Panc1 (cell line): ENCODE measurements at regions of chr1 and their contacts with region 1.

Region 1: DNA sequence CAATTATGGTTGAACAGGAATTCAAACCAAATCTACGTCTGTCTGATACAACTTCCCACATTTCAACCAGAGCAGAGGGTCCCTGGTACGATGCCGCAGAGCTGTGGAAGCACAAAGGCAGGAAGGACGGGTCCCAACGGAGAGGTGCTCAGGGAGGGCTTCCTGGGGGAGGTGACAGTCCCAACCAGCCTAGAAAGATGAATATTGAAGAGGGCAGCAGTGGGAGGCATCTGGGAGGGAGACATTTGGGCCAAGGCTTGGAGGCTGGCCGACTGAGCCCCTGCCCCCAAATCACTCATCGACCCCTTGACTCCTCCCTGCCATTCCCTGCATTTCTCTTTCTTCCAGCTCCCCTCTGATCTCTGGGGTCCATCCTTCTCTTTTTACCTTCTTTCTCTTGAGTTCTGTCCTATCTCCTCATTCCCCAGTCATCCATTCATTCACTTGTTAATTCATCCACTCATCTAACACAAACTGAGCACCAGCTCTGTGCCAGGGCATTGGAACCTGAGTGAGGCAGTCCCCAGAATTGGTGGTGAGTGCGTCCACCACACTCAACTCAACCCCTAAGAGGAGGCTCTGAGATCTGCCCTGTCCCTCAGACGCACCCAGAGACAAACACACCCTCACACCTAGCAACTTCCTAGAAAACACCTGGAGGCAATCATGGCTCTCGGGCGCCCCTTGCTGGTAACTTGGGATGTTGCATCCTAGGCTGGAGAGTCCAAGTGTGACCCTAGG is 13.2 kb upstream of the CELA3B start:
- DNase-seq: peak; percentile 62
- ATAC-seq: peak; percentile 91
- H3K4me3 ChIP-seq: no peak overlapping the region
- H3K27ac ChIP-seq: peak overlapping the region; percentile 32
- H3K4me1 ChIP-seq: peaks cover 8% of the 10 kb centered on the region
- H3K27me3 ChIP-seq: no peaks in the 10 kb centered on the region
- CTCF ChIP-seq: peak; percentile 93; the same call in 1 of the 2 replicates

Region 2: DNA sequence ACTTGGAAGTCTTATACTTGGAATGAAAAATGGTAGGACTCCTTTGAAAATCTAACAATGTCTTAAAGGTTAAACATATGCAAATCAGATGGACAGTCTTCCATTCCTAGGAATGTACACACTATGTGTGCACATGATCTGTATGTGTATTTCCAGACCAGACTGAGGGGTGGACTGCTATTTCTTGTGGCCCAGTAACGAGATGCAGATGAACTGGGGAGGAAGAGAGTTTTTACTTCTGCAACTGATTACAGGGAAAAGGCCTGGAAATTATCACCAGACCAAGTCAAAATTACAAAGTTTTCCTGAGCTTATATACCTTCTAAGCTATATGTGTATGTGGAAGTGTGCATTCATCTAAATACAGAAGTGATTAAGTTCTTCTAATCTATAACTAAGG is 506.0 kb before region 1 on chr1:
- CTCF ChIA-PET with region 1: no interaction called
- POLR2A ChIA-PET with region 1: no interaction called
- in situ Hi-C with region 1: no loop called
- intact Hi-C with region 1: no loop called
- DNase-seq: no peak
- ATAC-seq: no peak
- H3K4me3 ChIP-seq: no peak overlapping the region
- H3K27ac ChIP-seq: no peak overlapping the region
- H3K4me1 ChIP-seq: no peaks in the 10 kb centered on the region
- H3K27me3 ChIP-seq: no peaks in the 10 kb centered on the region
- CTCF ChIP-seq: no peak

Region 3: DNA sequence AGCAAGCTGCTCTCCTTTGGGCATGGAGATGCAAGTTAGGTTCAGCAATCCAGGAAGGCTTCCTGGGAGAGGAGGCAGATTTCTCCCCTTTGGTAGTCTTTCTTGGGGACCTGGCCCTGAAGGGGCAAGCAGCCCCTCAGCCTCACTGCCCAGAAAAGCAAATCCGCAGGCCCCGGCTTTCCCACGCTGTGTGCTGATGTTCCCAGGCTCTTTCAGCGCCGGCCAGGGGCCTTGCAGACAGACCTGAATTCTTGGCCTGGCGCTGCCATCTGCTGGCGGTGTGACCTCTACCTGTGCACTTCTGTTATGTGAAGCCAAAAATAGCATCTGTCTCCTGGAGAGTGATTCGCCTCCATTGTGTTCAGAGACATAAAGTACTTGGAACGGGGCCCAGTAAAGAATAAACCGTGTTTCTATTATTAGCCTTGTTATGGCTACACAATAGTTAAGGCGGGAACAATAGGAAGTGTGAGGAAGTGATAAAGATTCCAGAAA is 389.6 kb before region 1 on chr1:
- CTCF ChIA-PET with region 1: interaction called, 10 read pairs
- POLR2A ChIA-PET with region 1: no interaction called
- in situ Hi-C with region 1: no loop called
- intact Hi-C with region 1: no loop called
- DNase-seq: no peak
- ATAC-seq: peak; percentile 90
- H3K4me3 ChIP-seq: no peak overlapping the region
- H3K27ac ChIP-seq: no peak overlapping the region
- H3K4me1 ChIP-seq: no peaks in the 10 kb centered on the region; the same call in none of the 2 replicates
- H3K27me3 ChIP-seq: no peaks in the 10 kb centered on the region
- CTCF ChIP-seq: no peak; the same call in 1 of the 2 replicates

Region 4: DNA sequence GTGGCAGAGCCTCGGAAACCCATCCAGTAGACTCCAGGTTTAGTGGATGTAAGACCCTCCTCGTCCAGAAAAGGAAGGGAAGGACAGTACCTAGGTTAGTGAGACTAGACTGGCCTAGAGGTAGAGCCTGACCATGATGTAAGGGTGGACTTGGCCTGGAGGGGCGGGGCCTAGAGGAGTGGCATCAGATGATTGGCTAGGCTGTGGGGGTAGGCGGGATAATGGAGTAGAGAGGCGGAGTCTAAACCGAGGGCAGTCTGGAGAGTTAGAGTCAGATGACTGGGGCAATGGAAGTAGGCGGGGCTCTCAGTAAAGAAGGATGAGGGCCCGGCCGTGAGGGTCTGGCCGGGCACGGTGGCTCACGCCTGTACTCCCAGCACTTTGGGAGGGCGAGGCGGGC is 817.0 kb after region 1 on chr1:
- CTCF ChIA-PET with region 1: no interaction called
- POLR2A ChIA-PET with region 1: no interaction called
- in situ Hi-C with region 1: no loop called
- intact Hi-C with region 1: no loop called
- DNase-seq: peak; percentile 13
- ATAC-seq: peak; percentile 79
- H3K4me3 ChIP-seq: no peak overlapping the region
- H3K27ac ChIP-seq: no peak overlapping the region
- H3K4me1 ChIP-seq: no peaks in the 10 kb centered on the region
- H3K27me3 ChIP-seq: no peaks in the 10 kb centered on the region
- CTCF ChIP-seq: no peak

Region 5: DNA sequence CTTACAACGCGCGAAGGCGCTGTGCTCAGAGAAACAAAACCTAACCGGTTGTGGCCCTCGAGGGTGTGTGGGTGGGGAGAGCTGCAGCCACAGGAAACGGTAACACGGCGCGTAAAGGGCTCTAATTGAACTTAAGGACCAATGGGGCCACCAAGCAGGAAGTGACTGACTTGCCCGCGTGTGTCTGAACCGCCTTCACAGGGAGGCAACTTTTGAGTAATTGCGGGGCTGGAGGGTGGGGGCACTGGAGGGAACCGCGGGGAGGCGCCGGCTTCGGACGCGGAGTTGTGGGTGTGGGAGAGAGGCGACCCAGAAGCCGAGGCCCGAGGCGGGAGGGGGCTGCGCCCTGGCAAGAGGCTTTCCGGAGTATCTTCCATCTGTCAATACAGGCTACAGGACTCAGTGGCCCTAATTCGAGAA is 1995.4 kb after region 1 on chr1:
- CTCF ChIA-PET with region 1: no interaction called
- POLR2A ChIA-PET with region 1: interaction called, 15 read pairs
- in situ Hi-C with region 1: no loop called
- intact Hi-C with region 1: no loop called
- DNase-seq: no peak
- ATAC-seq: peak; percentile 74
- H3K4me3 ChIP-seq: peak overlapping the region; percentile 78 to 98
- H3K27ac ChIP-seq: peak overlapping the region; percentile 100
- H3K4me1 ChIP-seq: peaks cover 51% of the 10 kb centered on the region
- H3K27me3 ChIP-seq: no peaks in the 10 kb centered on the region
- CTCF ChIP-seq: peak; percentile 50; the same call in 1 of the 2 replicates